CD8-positive, alpha-beta memory T cell (primary cell): ENCODE measurements at regions of chr17 and their contacts with region 1.

Region 1: DNA sequence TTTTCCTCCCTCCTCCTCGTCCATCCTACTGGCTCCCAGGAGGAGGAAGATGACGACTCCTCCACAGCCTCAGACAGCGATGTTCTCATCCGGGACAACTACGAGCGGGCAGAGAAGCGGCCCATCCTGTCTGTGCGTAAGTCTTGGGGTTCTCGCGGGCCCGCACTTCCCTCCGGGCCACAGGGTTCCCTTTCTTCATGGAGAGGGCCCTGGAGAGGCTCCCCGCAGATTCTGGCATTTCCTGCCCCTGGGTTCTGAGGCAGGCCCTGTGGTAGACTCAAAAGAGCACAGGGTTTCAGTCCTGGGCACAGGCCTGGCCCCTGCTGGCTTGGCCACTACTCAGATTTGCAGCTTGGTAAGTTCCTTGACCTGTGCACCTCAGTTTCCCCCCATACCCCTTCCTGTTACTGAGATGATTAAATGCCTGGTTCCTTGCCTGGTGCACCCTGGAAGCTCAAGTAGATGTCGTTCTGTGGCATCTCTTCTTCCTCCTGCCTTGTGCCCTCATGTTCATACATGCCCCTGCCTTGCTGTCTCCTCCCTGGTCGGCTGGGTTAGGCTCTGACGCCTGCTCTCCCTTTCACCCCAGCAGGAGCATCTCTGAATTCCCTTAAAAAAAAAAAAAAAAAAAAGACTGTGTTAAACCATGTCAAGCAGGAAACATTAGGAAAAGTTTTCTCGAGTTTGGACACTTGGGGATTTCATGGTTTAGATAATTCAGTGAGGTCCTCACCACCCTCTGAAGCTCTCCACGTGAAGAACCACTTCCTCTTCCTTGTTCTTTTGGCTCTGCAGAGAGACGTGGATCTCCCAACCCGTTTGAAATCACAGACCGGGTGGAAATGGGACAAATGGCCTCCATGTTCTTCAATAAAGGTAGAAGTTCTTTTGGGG is 14.3 kb upstream of the NAT9 start:
- DNase-seq: no peak
- H3K4me3 ChIP-seq: peak overlapping the region; percentile 8
- H3K4me3 Mint-ChIP-seq: peak overlapping the region in 1 of 7 donors; percentile 15
- H3K27ac ChIP-seq: no peak overlapping the region
- H3K27ac Mint-ChIP-seq: peak overlapping the region in 4 of 8 donors; percentile 4 to 52 (median 13)
- H3K4me1 ChIP-seq: peaks cover 37% of the 10 kb centered on the region
- H3K4me1 Mint-ChIP-seq: peaks cover 18 to 26% (median 18%) of the 10 kb centered on the region in 3 donors
- H3K27me3 ChIP-seq: no peaks in the 10 kb centered on the region
- H3K27me3 Mint-ChIP-seq: no peaks in the 10 kb centered on the region

Region 2: GRCh38 chr17:74759243-74759801 is 31.1 kb before region 1 on chr17:
- CTCF ChIA-PET with region 1: interaction called, 10 read pairs
- POLR2A ChIA-PET with region 1: no interaction called
- DNase-seq: peak; percentile 46 to 77 (median 59)
- H3K4me3 ChIP-seq: peak overlapping the region; percentile 57
- H3K4me3 Mint-ChIP-seq: peak overlapping the region; percentile 55 to 90 (median 85)
- H3K27ac ChIP-seq: no peak overlapping the region
- H3K27ac Mint-ChIP-seq: peak overlapping the region; percentile 81 to 96 (median 90)
- H3K4me1 ChIP-seq: peaks cover 91% of the 10 kb centered on the region
- H3K4me1 Mint-ChIP-seq: peaks cover 73 to 87% (median 73%) of the 10 kb centered on the region in 3 donors
- H3K27me3 ChIP-seq: no peaks in the 10 kb centered on the region
- H3K27me3 Mint-ChIP-seq: no peaks in the 10 kb centered on the region

Region 3: GRCh38 chr17:74770498-74771318 is 19.7 kb before region 1 on chr17:
- CTCF ChIA-PET with region 1: interaction called, 17 read pairs
- POLR2A ChIA-PET with region 1: no interaction called
- DNase-seq: peak; percentile 65 to 86 (median 73)
- H3K4me3 ChIP-seq: no peak overlapping the region
- H3K4me3 Mint-ChIP-seq: peak overlapping the region in 2 of 7 donors; percentile 36 to 83
- H3K27ac ChIP-seq: no peak overlapping the region
- H3K27ac Mint-ChIP-seq: peak overlapping the region; percentile 65 to 99 (median 82)
- H3K4me1 ChIP-seq: peaks cover 27% of the 10 kb centered on the region
- H3K4me1 Mint-ChIP-seq: peaks cover 38 to 61% (median 54%) of the 10 kb centered on the region in 3 donors
- H3K27me3 ChIP-seq: no peaks in the 10 kb centered on the region
- H3K27me3 Mint-ChIP-seq: peaks cover 0 to 2% of the 10 kb centered on the region in 2 donors

Region 4: DNA sequence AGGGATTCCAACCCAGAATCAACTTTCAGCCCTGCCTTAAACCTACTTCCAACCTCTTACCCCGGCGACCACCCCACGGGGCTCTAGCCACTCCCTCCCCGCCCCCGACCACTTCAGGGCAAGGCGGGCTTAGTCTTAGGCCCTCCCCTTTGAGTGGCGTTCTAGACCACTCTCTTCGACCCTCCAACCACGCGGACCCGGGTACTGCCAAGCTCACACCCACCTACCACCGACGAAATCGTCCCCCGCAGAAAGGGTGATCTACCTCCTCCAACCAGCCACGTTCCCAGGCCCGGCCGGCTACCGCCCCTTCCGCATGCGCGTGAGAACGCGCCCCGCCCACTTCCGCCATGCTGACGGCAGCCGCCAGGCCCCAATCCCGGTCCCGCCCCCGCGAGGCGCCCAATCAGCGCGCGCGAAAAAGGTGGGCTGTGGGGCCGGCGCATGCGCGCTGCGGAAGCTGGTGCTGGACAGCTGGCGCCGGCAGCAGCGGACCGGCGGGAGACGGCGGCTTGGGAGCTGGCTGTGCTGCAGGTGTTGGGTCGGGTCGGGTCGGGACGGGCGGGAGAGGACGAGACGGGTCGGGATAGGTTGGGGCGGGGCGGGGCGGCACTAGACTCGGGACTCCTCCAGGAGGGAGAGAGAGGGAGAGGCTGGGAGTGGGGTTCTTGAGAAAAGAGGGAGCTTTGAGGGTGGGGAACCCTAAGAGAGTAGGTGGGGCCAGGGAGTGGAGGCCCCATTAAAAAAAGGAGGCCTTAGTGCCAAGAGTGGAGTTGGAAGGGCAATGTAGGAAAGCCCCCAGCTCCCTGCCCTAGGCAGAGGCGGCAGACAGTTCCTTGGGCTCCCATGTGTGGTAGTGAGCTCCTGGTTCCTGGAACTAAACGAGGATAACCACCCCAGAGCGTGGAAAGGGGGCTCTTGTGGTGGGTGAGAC is 14.1 kb before region 1 on chr17 and contains the start of gene NAT9:
- CTCF ChIA-PET with region 1: interaction called, 44 read pairs
- POLR2A ChIA-PET with region 1: interaction called, 4 read pairs
- DNase-seq: peak; percentile 97 to 99 (median 99)
- H3K4me3 ChIP-seq: peak within 1 kb of the TSS; percentile 91
- H3K4me3 Mint-ChIP-seq: peak within 1 kb of the TSS; percentile 97 to 99 (median 98)
- H3K27ac ChIP-seq: peak within 1 kb of the TSS; percentile 73
- H3K27ac Mint-ChIP-seq: peak within 1 kb of the TSS; percentile 93 to 98 (median 98)
- H3K4me1 ChIP-seq: peaks cover 59% of the 10 kb centered on the region
- H3K4me1 Mint-ChIP-seq: peaks cover 60 to 83% (median 80%) of the 10 kb centered on the region in 3 donors
- H3K27me3 ChIP-seq: no peaks in the 10 kb centered on the region
- H3K27me3 Mint-ChIP-seq: no peaks in the 10 kb centered on the region
- total RNA-seq, gene NAT9: 42.7 to 44.5 TPM

Region 5: DNA sequence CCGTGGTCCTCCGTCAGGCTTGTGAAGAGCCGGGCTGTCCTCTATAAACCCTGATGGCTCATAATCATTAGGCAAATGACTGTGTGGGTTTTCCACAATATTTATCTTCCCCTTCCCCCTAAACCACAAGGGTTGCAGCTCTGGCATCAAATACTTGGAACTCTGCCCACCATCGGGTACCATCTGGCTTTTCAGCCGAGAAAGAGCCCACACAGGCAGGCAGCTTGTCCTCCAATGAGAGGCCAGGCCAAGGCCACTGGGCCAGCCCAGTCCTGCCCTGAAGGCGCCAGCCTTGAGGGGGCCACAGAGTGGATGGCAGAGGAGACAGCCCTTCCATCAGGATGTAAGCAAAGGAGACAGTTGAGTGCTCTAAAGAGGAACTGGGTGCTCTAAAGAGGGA is 17.5 kb after region 1 on chr17:
- CTCF ChIA-PET with region 1: interaction called, 15 read pairs
- POLR2A ChIA-PET with region 1: no interaction called
- DNase-seq: no peak
- H3K4me3 ChIP-seq: no peak overlapping the region
- H3K4me3 Mint-ChIP-seq: no peak overlapping the region
- H3K27ac ChIP-seq: no peak overlapping the region
- H3K27ac Mint-ChIP-seq: no peak overlapping the region
- H3K4me1 ChIP-seq: no peaks in the 10 kb centered on the region
- H3K4me1 Mint-ChIP-seq: no peaks in the 10 kb centered on the region
- H3K27me3 ChIP-seq: no peaks in the 10 kb centered on the region
- H3K27me3 Mint-ChIP-seq: no peaks in the 10 kb centered on the region

Region 6: GRCh38 chr17:74864866-74865395 is 74.5 kb after region 1 on chr17:
- CTCF ChIA-PET with region 1: interaction called, 90 read pairs
- POLR2A ChIA-PET with region 1: no interaction called
- DNase-seq: peak; percentile 50 to 75 (median 63)
- H3K4me3 ChIP-seq: no peak overlapping the region
- H3K4me3 Mint-ChIP-seq: no peak overlapping the region
- H3K27ac ChIP-seq: no peak overlapping the region
- H3K27ac Mint-ChIP-seq: peak overlapping the region in 3 of 8 donors; percentile 42 to 67 (median 44)
- H3K4me1 ChIP-seq: peaks cover 17% of the 10 kb centered on the region
- H3K4me1 Mint-ChIP-seq: peaks cover 10 to 22% (median 12%) of the 10 kb centered on the region in 3 donors
- H3K27me3 ChIP-seq: peaks cover 14% of the 10 kb centered on the region
- H3K27me3 Mint-ChIP-seq: peaks cover 10 to 14% of the 10 kb centered on the region in 2 donors